ENCODE measurements at regions of chr19 and their contacts with region 1.

Region 1: GRCh38 chr19:19643158-19644053 is at the start of gene GMIP:
- DNase-seq: peak; percentile 79 to 96 (median 91)
- ATAC-seq: peak; percentile 93
- H3K4me3 ChIP-seq: peak within 1 kb of the TSS; percentile 100
- H3K4me3 Mint-ChIP-seq: peak within 1 kb of the TSS; percentile 95
- H3K27ac ChIP-seq: peak within 1 kb of the TSS; percentile 92 to 93
- H3K27ac Mint-ChIP-seq: peak within 1 kb of the TSS; percentile 93
- H3K4me1 ChIP-seq: peaks cover 20% of the 10 kb centered on the region
- H3K4me1 Mint-ChIP-seq: peaks cover 20% of the 10 kb centered on the region
- H3K27me3 ChIP-seq: no peaks in the 10 kb centered on the region
- H3K27me3 Mint-ChIP-seq: no peaks in the 10 kb centered on the region
- CTCF ChIP-seq: peak; percentile 83
- total RNA-seq, gene GMIP: 82.7 to 85.7 TPM

Region 2: GRCh38 chr19:19320362-19321142 is 322.9 kb before region 1 on chr19 and contains the starts of genes MAU2 and SUGP1:
- CTCF ChIA-PET with region 1: no interaction called
- POLR2A ChIA-PET with region 1: no interaction called
- intact Hi-C with region 1: loop called in 1 of 2 experiments (anchors 10 kb)
- DNase-seq: peak; percentile 81 to 95 (median 88)
- ATAC-seq: peak; percentile 90
- H3K4me3 ChIP-seq: peak within 1 kb of the TSS; percentile 88 to 94
- H3K4me3 Mint-ChIP-seq: peak within 1 kb of the TSS; percentile 99
- H3K27ac ChIP-seq: peak within 1 kb of the TSS; percentile 88 to 97
- H3K27ac Mint-ChIP-seq: peak within 1 kb of the TSS; percentile 99
- H3K4me1 ChIP-seq: peaks cover 35% of the 10 kb centered on the region
- H3K4me1 Mint-ChIP-seq: peaks cover 40% of the 10 kb centered on the region
- H3K27me3 ChIP-seq: no peaks in the 10 kb centered on the region
- H3K27me3 Mint-ChIP-seq: no peaks in the 10 kb centered on the region
- CTCF ChIP-seq: no peak
- total RNA-seq, gene MAU2: 137 to 139 TPM
- total RNA-seq, gene SUGP1: 60.9 to 68.2 TPM

Region 3: GRCh38 chr19:19562665-19563347 is 80.6 kb before region 1 on chr19:
- CTCF ChIA-PET with region 1: interaction called, 26 read pairs
- POLR2A ChIA-PET with region 1: no interaction called
- intact Hi-C with region 1: loop called (anchors 1 kb)
- DNase-seq: peak in 7 of 9 experiments; percentile 22 to 71 (median 62)
- ATAC-seq: peak; percentile 82
- H3K4me3 ChIP-seq: no peak overlapping the region
- H3K4me3 Mint-ChIP-seq: no peak overlapping the region
- H3K27ac ChIP-seq: no peak overlapping the region
- H3K27ac Mint-ChIP-seq: no peak overlapping the region
- H3K4me1 ChIP-seq: peaks cover 8% of the 10 kb centered on the region
- H3K4me1 Mint-ChIP-seq: peaks cover 18% of the 10 kb centered on the region
- H3K27me3 ChIP-seq: no peaks in the 10 kb centered on the region
- H3K27me3 Mint-ChIP-seq: no peaks in the 10 kb centered on the region
- CTCF ChIP-seq: peak; percentile 22

Region 4: DNA sequence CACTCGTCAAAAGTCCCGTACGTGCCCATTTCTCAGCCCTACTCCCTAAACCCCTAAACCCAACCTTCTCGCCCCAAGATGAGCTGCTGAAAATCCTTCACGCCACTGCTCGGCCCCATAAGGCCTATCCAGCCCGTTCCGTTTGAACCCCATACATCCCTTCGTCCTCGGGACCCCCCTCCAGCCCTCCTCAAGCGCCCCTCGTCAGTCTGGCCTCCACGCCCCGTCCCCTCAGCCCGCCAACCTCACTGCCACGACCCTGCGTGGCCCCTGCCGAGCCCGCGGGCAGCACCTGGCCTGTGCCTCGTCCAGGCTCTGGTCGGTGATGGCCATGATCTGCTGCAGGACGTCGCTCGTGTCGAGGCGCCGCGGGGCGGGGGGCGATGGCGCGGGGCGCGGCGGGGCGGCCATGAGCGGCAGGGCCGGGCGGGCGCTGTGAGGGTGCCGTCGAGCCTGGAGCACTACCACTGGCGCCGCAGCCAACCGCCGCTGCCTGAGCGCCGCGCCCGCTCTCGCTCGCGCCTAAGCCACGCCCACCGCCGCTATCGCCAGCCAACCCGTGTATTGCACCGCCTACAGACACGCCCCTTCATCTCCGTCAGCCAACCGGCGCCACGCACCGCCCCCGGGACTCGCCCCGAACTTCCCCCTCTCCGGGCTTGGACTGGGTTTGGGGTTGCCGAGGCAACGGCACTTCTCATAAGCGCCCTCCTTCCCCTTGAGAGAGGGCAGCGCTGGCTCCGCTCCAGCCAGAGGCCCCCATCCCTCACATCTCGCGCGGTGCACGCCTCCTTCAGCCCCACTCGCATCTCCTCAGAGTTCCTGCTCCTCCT is 25.0 kb before region 1 on chr19 and contains the start of gene PBX4:
- CTCF ChIA-PET with region 1: interaction called, 6 read pairs
- POLR2A ChIA-PET with region 1: no interaction called
- intact Hi-C with region 1: loop called (anchors 1 kb)
- DNase-seq: peak; percentile 98 to 100 (median 99)
- ATAC-seq: peak; percentile 96
- H3K4me3 ChIP-seq: peak within 1 kb of the TSS; percentile 70 to 91
- H3K4me3 Mint-ChIP-seq: peak within 1 kb of the TSS; percentile 90
- H3K27ac ChIP-seq: peak within 1 kb of the TSS; percentile 74 to 75
- H3K27ac Mint-ChIP-seq: peak within 1 kb of the TSS; percentile 92
- H3K4me1 ChIP-seq: peaks cover 28% of the 10 kb centered on the region
- H3K4me1 Mint-ChIP-seq: peaks cover 42% of the 10 kb centered on the region
- H3K27me3 ChIP-seq: no peaks in the 10 kb centered on the region
- H3K27me3 Mint-ChIP-seq: no peaks in the 10 kb centered on the region
- CTCF ChIP-seq: no peak
- total RNA-seq, gene PBX4: 44.4 to 48.8 TPM

Region 5: DNA sequence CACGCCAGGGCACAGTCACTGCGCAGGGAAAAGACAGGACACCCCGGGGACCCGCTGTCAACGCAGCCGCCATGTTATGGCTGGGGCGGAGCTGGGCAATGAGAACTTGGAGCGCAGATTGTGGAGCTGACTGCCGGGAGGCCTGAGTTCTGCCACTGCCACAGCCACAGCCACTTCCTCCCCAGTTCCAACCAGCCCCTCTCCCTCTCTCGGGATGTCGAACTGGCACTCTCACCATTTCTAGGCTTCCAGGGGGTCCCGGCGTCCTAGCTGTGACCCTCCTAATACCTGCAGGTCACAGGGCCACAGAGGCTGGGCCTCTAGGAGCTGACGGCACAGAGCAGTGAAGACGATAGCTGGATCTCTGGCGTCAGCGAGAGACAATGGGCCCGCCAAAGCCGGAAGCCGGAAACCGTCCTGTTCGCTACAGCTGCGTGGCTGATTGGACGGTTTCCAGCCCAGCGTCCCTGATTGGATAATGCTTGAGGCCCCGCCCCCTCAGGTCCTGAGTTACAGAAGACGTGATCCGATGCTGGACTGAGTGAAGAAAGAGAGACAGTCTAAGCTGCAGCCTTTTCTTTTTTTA is 178.1 kb after region 1 on chr19 and contains the start of gene ZNF506:
- CTCF ChIA-PET with region 1: no interaction called
- POLR2A ChIA-PET with region 1: no interaction called
- intact Hi-C with region 1: no loop called
- DNase-seq: peak; percentile 95 to 99 (median 97)
- ATAC-seq: peak; percentile 82
- H3K4me3 ChIP-seq: peak within 1 kb of the TSS; percentile 91 to 97
- H3K4me3 Mint-ChIP-seq: peak within 1 kb of the TSS; percentile 100
- H3K27ac ChIP-seq: peak within 1 kb of the TSS; percentile 96 to 98
- H3K27ac Mint-ChIP-seq: peak within 1 kb of the TSS; percentile 100
- H3K4me1 ChIP-seq: peaks cover 33% of the 10 kb centered on the region
- H3K4me1 Mint-ChIP-seq: peaks cover 38% of the 10 kb centered on the region
- H3K27me3 ChIP-seq: no peaks in the 10 kb centered on the region
- H3K27me3 Mint-ChIP-seq: no peaks in the 10 kb centered on the region
- CTCF ChIP-seq: no peak
- total RNA-seq, gene ZNF506: 50.2 to 50.4 TPM

Region 6: DNA sequence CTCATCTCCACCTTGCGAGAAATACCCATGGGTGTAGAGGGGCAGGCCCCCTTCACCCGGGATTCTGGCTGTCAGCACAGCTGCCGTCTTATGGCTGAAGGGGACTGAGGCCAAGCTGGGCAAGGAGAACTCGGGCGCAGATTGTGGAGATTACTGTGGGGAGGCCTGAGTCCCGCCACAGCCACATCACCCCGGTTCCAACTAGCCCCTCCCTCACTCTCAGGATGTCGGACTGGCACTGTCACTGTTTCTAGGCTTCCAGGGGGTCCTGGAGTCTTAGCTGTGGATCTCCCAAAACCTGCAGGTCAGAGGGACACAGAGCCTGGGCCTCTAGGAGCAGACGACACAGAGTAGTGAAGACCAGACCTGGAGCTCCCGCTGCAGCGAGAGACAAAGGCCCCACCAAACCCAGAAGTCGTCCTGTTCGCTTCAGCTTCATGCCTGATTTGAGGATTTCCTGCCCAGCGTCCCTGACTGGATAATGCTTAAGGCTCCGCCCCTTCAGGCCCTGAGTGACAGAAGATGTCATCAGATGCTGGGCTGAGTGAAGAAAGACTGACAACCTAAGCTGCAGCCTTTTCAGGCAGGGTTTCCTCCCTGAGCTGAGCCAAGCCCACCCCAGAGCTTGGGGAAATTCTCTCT is 313.1 kb after region 1 on chr19:
- CTCF ChIA-PET with region 1: interaction called, 3 read pairs
- POLR2A ChIA-PET with region 1: no interaction called
- intact Hi-C with region 1: loop called (anchors 1 to 5 kb)
- DNase-seq: no peak
- ATAC-seq: no peak
- H3K4me3 ChIP-seq: no peak overlapping the region
- H3K4me3 Mint-ChIP-seq: no peak overlapping the region
- H3K27ac ChIP-seq: no peak overlapping the region
- H3K27ac Mint-ChIP-seq: no peak overlapping the region
- H3K4me1 ChIP-seq: no peaks in the 10 kb centered on the region
- H3K4me1 Mint-ChIP-seq: peaks cover 3% of the 10 kb centered on the region
- H3K27me3 ChIP-seq: no peaks in the 10 kb centered on the region
- H3K27me3 Mint-ChIP-seq: no peaks in the 10 kb centered on the region
- CTCF ChIP-seq: no peak